ENCODE measurements at regions of chr3 and their contacts with region 1.

Region 1: GRCh38 chr3:195442573-195443390 is at the start of gene ACAP2:
- DNase-seq: peak; percentile 100

Region 2: GRCh38 chr3:194671900-194672808 is 770.6 kb before region 1 on chr3 and contains the start of gene LSG1:
- intact Hi-C with region 1: loop called (anchors 5 kb)
- DNase-seq: peak; percentile 83 to 97 (median 92)

Region 3: DNA sequence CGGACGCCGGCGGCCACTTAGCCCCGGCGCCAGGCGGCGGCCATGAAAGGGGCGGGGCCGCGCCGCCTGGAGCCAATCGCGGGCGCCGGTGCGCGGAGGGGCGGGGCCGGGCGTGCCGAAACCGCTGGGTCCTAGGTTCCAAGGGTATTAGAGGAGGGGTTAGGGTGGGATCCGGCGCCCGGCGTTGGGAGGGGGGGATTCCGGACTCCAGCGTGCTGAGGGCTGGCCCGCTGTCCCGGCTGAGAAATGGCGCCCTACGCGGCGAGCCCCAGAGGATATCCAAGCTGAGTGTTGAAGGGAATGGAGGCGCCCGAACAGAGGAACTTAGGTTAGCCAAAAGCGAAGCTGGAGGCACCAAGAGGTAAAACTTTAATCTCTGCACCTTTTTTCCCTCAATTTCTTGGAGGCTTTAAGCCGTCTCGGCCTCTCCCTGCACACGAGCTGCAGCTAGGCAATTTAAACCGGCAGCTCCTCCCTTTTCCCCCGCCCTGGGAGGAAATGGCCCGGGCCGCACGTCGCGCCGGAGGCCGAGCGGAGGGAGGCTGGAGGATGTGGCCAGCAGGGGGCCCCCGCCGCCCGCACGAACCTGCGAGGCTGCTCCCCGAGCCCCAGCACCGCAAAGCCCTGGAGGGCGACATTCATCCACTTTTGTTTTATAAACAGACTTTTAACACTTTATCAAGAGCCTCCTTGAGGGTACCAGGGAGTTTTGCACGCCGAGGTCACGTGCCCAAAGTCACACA is 171.5 kb before region 1 on chr3 and contains the start of gene XXYLT1:
- intact Hi-C with region 1: loop called (anchors 5 kb)
- DNase-seq: peak; percentile 75 to 96 (median 91)

Region 4: DNA sequence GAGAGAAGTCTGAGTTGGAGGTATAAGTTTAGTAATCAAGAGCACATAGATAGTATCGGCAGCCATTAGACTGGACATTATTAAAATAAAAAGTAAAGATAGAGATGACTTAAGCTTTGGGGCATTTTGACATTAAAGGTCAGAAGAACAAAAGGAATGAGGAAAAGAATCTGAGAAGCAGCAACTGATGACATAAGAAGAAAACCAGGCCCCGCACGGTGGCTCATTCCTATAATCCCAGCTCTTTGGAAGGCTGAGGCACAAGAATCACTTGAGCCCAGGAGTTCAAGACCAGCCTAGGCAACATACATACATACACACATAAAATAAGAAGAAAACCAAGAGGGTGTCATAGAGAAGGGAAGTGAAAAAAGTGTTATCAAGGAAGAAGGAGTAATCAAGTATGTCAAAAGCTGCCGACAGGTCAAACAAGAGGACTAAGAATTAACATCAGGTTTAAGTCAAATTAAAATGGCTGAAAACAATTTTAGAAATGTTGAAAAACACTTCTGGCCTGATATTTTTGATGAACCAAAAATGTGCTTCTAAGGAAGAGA is 38.9 kb before region 1 on chr3:
- intact Hi-C with region 1: no loop called
- DNase-seq: no peak

Region 5: DNA sequence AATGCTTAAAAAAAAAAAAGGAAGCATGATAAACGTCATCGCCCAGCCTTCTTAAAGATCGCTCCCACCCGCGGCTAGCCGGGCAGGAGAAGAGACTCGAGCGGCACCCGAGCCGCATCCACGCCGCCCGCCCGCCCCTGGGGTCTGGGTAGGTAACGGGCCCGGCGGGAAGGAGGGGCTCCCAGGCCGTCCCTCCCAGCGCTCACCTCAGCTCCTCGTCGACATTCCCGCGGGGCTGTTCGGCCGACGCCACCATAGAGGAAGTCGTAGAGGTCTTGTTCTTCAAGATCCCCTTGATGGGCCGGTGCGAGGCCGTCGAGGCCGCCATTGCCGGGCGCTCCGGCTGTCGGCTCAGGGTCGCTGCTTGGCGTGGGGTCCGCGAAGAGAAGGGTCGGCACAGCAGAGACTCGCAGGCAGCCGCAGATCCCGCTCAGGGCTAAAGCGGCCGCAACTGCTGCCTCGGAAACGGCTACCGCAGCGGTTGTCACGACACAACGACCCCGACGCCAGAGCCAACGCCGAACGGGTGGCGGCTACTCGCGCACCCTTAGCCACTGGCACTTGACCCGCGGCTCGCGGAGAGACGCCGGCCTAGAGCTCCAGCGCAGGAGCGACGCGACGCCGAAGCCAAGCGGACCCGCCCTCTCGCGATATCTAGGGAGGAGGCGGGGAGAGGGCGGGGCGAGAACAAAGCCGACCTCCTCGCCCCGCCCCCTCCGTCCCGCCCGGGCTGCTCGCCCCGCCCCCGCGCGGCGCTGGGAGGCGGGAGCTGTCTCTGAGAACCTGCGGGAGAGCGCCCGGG is 100.1 kb after region 1 on chr3 and contains the start of gene PPP1R2:
- intact Hi-C with region 1: loop called (anchors 10 kb)
- DNase-seq: peak; percentile 80 to 98 (median 94)